ENCODE measurements at regions of chr3 and their contacts with region 1.

Region 1: GRCh38 chr3:101414121-101414520 is 93.7 kb upstream of the IMPG2 start:
- DNase-seq: no peak
- H3K4me3 Mint-ChIP-seq: no peak overlapping the region
- H3K27ac Mint-ChIP-seq: peak overlapping the region; percentile 83
- H3K4me1 Mint-ChIP-seq: peaks cover 25% of the 10 kb centered on the region
- H3K27me3 Mint-ChIP-seq: no peaks in the 10 kb centered on the region

Region 2: GRCh38 chr3:101433653-101434052 is 19.5 kb after region 1 on chr3:
- intact Hi-C with region 1: no loop called
- DNase-seq: no peak
- H3K4me3 Mint-ChIP-seq: no peak overlapping the region
- H3K27ac Mint-ChIP-seq: no peak overlapping the region
- H3K4me1 Mint-ChIP-seq: no peaks in the 10 kb centered on the region
- H3K27me3 Mint-ChIP-seq: no peaks in the 10 kb centered on the region

Region 3: DNA sequence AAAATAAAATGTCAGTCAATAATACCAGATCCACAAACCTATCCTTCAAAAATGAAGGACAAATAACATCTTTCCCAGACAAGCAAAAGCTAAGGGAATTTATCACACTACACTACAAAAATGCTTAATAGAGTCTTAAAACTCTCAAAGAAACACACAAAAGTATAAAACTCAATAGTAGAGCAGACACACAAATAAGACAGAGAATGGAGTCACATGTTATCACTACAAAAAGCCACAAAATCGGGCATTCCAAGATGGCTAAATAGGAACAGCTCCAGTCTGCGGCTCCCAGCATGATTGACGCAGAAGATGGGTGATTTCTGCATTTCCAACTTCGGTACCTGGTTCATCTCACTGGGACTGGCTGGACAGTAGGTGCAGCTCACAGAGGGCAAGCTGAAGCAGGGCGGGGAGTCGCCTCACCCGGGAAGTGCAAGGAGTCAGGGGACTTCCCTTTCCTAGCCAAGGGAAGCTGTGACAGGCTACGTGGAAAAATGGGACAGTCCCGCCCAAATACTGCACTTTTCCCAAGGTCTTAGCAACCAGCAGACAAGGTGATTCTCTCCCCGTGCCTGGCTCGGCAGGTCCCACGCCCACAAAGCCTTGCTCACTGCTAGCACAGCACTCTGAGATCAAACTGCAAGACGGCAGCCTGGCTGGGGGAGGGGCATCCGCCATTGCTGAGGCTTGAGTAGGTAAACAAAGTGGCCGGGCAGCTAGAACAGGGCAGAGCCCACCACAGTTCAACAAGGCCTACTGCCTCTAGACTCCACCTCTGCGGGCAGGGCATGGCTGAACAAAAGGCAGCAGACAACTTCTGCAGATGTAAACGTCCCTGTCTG is 52.6 kb after region 1 on chr3:
- intact Hi-C with region 1: loop called (anchors 10 kb)
- DNase-seq: peak; percentile 25
- H3K4me3 Mint-ChIP-seq: peak overlapping the region; percentile 37
- H3K27ac Mint-ChIP-seq: peak overlapping the region; percentile 66
- H3K4me1 Mint-ChIP-seq: peaks cover 23% of the 10 kb centered on the region
- H3K27me3 Mint-ChIP-seq: no peaks in the 10 kb centered on the region

Region 4: DNA sequence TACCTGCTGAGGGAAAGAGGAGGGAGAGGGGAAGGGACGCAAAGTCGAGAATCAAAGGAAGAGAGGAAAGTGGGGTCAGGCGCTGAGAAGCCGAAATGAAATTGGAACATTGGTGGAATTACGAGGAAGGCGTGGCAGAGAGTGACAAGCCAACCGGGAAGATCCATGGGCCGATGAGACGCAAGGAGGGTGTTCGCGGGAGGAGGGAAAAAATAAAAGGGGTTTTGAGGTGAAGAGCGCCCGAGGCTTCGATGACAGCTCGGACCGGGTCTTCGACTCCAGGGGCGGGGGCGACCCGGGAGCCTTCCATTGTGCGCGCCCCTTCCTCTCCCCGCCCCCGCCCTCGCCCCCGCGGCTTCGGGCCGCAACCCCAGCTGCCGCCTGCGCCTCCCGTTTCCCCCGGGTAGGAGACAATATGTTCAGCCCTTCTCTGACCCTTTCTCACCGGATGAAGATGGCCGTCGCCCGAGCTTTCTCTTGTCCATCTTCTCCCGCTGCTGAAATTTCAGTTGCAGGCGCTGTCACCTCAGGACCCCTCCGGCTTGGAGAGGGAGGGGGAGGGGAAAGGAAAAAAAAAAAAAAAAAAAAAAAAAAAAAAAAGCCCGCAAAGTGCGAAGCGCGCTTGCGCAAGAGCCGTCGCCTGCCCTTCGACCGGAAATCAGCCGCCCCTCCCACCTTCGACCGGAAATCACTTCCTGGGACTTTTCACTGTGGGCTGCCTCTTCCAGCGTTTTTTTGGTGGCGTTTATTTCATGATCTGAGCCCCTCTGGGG is 98.7 kb after region 1 on chr3 and contains the start of gene SENP7:
- intact Hi-C with region 1: loop called (anchors 2 kb)
- DNase-seq: peak; percentile 72
- H3K4me3 Mint-ChIP-seq: peak within 1 kb of the TSS; percentile 94
- H3K27ac Mint-ChIP-seq: peak within 1 kb of the TSS; percentile 95
- H3K4me1 Mint-ChIP-seq: peaks cover 31% of the 10 kb centered on the region
- H3K27me3 Mint-ChIP-seq: no peaks in the 10 kb centered on the region
- total RNA-seq, gene SENP7: 9.1 and 10.7 TPM in 2 replicates

Region 5: DNA sequence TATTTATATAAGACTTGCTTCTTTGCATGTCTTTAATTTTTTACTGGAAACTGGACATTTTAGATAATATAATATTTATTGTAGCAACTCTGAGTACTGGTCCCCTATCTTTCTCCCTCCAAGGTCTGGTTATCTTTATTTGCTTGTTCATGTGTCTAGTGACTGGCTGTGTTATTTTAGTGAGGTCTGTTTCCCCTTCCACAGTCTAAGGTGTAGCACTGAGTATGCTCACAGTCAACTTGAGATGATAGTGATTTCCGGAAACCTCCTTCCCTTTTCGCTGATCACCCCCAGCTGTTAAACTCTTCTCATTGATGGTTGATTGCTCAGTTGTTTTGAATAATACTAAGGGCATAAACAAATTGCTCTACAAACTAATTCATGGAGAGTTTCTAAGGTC is 196.9 kb after region 1 on chr3:
- intact Hi-C with region 1: no loop called
- DNase-seq: no peak
- H3K4me3 Mint-ChIP-seq: no peak overlapping the region
- H3K27ac Mint-ChIP-seq: no peak overlapping the region
- H3K4me1 Mint-ChIP-seq: no peaks in the 10 kb centered on the region
- H3K27me3 Mint-ChIP-seq: no peaks in the 10 kb centered on the region

Measured in activated T-helper 1 cell treated with anti-CD3 and anti-CD28 coated beads, Interleukin-12 subunit alpha, Interleukin-12 subunit beta, Interleukin-2, Interleukin-4 antibody, amounts not matched to agents 30 ng/mL and 10 ng/mL and 1 ng/mL, durations not matched to agents 14 hours and 24 hours and 36 hours (primary cell).